ENCODE measurements at regions of chr7 and their contacts with region 1.

Region 1: GRCh38 chr7:31488562-31489203 is 25.2 kb upstream of the ITPRID1 start:
- DNase-seq: peak; percentile 34
- ATAC-seq: peak; percentile 100
- H3K4me3 ChIP-seq: no peak overlapping the region
- H3K27ac ChIP-seq: no peak overlapping the region
- H3K4me1 ChIP-seq: 0 out of 2 replicates have a peak, but pooled peaks cover 3% of the 10 kb centered on the region
- H3K27me3 ChIP-seq: no peaks in the 10 kb centered on the region
- CTCF ChIP-seq: peak; percentile 71 to 90 (median 89)
- EP300 ChIP-seq: no peak
- POLR2A ChIP-seq: no peak
- RAD21 ChIP-seq: peak; percentile 69

Region 2: GRCh38 chr7:31134246-31135188 is 354.2 kb before region 1 on chr7:
- CTCF ChIA-PET with region 1: interaction called, 9 read pairs
- POLR2A ChIA-PET with region 1: no interaction called
- RAD21 ChIA-PET with region 1: no interaction called
- SMC1A ChIA-PET with region 1: no interaction called
- in situ Hi-C with region 1: no loop called
- intact Hi-C with region 1: loop called (anchors 1 kb)
- DNase-seq: no peak
- ATAC-seq: peak; percentile 97
- H3K4me3 ChIP-seq: no peak overlapping the region
- H3K27ac ChIP-seq: no peak overlapping the region
- H3K4me1 ChIP-seq: no peaks in the 10 kb centered on the region
- H3K27me3 ChIP-seq: no peaks in the 10 kb centered on the region
- CTCF ChIP-seq: peak; percentile 61 to 75 (median 63)
- EP300 ChIP-seq: no peak
- POLR2A ChIP-seq: no peak
- RAD21 ChIP-seq: peak; percentile 80

Region 3: DNA sequence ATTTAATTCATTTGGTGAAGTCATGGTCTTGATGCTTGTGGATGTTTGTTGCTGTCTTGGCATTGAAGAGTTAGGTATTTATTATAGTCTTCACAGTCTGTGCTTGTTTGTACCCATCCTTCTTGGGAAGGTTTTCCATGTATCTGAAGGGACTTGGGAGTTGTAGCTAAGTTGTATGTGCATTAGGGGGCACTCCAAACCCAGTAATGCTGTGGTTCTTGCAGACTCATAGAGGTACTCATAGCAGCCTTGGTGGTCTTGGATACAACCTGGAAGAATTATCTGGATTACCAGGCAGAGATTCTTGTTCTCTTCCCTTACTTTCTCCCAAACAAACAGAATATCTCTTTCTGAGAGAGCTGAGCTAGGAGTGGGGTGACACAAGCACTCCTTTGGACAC is 343.3 kb before region 1 on chr7:
- CTCF ChIA-PET with region 1: no interaction called
- POLR2A ChIA-PET with region 1: no interaction called
- RAD21 ChIA-PET with region 1: no interaction called
- SMC1A ChIA-PET with region 1: no interaction called
- in situ Hi-C with region 1: no loop called
- intact Hi-C with region 1: loop called (anchors 5 kb)
- DNase-seq: no peak
- ATAC-seq: no peak
- H3K4me3 ChIP-seq: no peak overlapping the region
- H3K27ac ChIP-seq: no peak overlapping the region
- H3K4me1 ChIP-seq: no peaks in the 10 kb centered on the region
- H3K27me3 ChIP-seq: no peaks in the 10 kb centered on the region
- CTCF ChIP-seq: no peak
- EP300 ChIP-seq: no peak
- POLR2A ChIP-seq: no peak
- RAD21 ChIP-seq: no peak

Region 4: GRCh38 chr7:31373337-31374289 is 115.1 kb before region 1 on chr7:
- CTCF ChIA-PET with region 1: no interaction called
- POLR2A ChIA-PET with region 1: no interaction called
- RAD21 ChIA-PET with region 1: no interaction called
- SMC1A ChIA-PET with region 1: interaction called, 4 read pairs
- in situ Hi-C with region 1: no loop called
- intact Hi-C with region 1: loop called (anchors 1 kb)
- DNase-seq: no peak
- ATAC-seq: peak; percentile 95
- H3K4me3 ChIP-seq: no peak overlapping the region
- H3K27ac ChIP-seq: no peak overlapping the region
- H3K4me1 ChIP-seq: no peaks in the 10 kb centered on the region
- H3K27me3 ChIP-seq: peaks cover 0 to 6% of the 10 kb centered on the region in 2 experiments; a peak in 1 of 4 replicates
- CTCF ChIP-seq: peak; percentile 60 to 77 (median 71)
- EP300 ChIP-seq: no peak
- POLR2A ChIP-seq: no peak
- RAD21 ChIP-seq: peak; percentile 63

Measured in GM12878 (cell line).